GM18951 (cell line): ENCODE measurements at regions of chr4 and their contacts with region 1.

Region 1: GRCh38 chr4:110005461-110006056 is 92.9 kb downstream of the EGF start:
- POLR2A ChIP-seq: no peak

Region 2: GRCh38 chr4:109614466-109614865 is 391.1 kb before region 1 on chr4:
- in situ Hi-C with region 1: no loop called
- POLR2A ChIP-seq: no peak

Region 3: DNA sequence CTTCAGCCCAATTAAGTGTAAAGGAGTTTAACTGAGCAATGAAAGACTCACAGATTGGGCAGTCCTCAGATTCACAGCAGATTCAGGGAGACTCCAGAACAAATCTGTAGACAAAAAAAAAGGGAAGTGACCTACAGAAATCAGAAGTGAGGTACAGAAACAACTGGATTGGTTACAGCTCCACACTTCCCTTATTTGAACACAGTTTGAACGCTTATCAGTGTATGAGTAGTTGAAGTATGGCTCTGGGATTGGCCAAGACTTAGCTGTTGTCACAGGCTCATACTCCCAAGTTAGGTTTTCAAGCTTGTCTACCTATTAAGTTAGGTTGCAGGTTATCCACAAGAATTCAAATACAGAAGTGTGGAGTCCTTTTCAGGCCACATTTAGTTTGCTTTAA is 305.2 kb after region 1 on chr4:
- in situ Hi-C with region 1: loop called (anchors 25 kb)
- POLR2A ChIP-seq: no peak

Region 4: DNA sequence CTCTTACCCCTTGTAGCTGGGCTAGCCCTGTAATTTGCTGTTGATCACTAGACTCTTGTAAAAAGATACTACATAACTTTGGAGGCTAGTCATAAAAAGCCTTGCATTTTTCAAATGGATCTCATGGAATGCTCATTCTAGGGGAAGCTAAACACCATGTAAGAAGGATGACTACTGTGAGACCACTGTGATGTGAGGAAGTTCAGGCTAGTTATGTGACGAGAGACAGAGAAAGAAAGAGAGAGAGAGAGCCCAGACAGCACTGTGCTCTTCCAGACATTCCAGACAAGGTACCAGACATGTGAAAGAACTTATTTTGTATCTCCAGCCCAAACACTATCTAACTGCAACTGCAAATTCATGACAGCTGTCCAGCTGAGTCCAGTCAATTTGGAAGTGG is 1022.0 kb after region 1 on chr4:
- in situ Hi-C with region 1: no loop called
- POLR2A ChIP-seq: no peak